Heart left ventricle (tissue), 16 donors: ENCODE measurements at regions of chr4 and their contacts with region 1.

Region 1: GRCh38 chr4:155709918-155710317 is 43.3 kb downstream of the GUCY1A1 start:
- DNase-seq: no peak
- ATAC-seq: no peak
- H3K4me3 ChIP-seq: no peak overlapping the region
- H3K27ac ChIP-seq: no peak overlapping the region
- H3K4me1 ChIP-seq: peaks cover 0 to 20% (median 8%) of the 10 kb centered on the region in 12 donors
- H3K27me3 ChIP-seq: no peaks in the 10 kb centered on the region
- CTCF ChIP-seq: no peak
- POLR2A ChIP-seq: no peak

Region 2: GRCh38 chr4:155639704-155640523 is 70.0 kb before region 1 on chr4:
- intact Hi-C with region 1: no loop called
- DNase-seq: no peak
- ATAC-seq: peak in 2 of 4 donors; percentile 9 to 14
- H3K4me3 ChIP-seq: peak overlapping the region in 1 of 12 donors; percentile 15
- H3K27ac ChIP-seq: peak overlapping the region in 1 of 12 donors; percentile 57
- H3K4me1 ChIP-seq: peaks cover 0 to 31% (median 0%) of the 10 kb centered on the region in 12 donors
- H3K27me3 ChIP-seq: no peaks in the 10 kb centered on the region
- CTCF ChIP-seq: no peak
- POLR2A ChIP-seq: no peak

Region 3: GRCh38 chr4:155675709-155676429 is 34.0 kb before region 1 on chr4:
- intact Hi-C with region 1: no loop called
- DNase-seq: no peak
- ATAC-seq: peak; percentile 34 to 47 (median 42)
- H3K4me3 ChIP-seq: peak overlapping the region in 7 of 12 donors; percentile 2 to 29 (median 14)
- H3K27ac ChIP-seq: peak overlapping the region; percentile 5 to 96 (median 52)
- H3K4me1 ChIP-seq: peaks cover 0 to 83% (median 32%) of the 10 kb centered on the region in 12 donors
- H3K27me3 ChIP-seq: no peaks in the 10 kb centered on the region
- CTCF ChIP-seq: no peak
- POLR2A ChIP-seq: no peak

Region 4: GRCh38 chr4:155751569-155751968 is 41.7 kb after region 1 on chr4:
- intact Hi-C with region 1: loop called in 2 of 10 experiments (anchors 2 to 5 kb)
- DNase-seq: no peak
- ATAC-seq: no peak
- H3K4me3 ChIP-seq: no peak overlapping the region
- H3K27ac ChIP-seq: no peak overlapping the region
- H3K4me1 ChIP-seq: no peaks in the 10 kb centered on the region
- H3K27me3 ChIP-seq: no peaks in the 10 kb centered on the region
- CTCF ChIP-seq: no peak
- POLR2A ChIP-seq: no peak